ENCODE measurements at regions of chr22 and their contacts with region 1.

Region 1: DNA sequence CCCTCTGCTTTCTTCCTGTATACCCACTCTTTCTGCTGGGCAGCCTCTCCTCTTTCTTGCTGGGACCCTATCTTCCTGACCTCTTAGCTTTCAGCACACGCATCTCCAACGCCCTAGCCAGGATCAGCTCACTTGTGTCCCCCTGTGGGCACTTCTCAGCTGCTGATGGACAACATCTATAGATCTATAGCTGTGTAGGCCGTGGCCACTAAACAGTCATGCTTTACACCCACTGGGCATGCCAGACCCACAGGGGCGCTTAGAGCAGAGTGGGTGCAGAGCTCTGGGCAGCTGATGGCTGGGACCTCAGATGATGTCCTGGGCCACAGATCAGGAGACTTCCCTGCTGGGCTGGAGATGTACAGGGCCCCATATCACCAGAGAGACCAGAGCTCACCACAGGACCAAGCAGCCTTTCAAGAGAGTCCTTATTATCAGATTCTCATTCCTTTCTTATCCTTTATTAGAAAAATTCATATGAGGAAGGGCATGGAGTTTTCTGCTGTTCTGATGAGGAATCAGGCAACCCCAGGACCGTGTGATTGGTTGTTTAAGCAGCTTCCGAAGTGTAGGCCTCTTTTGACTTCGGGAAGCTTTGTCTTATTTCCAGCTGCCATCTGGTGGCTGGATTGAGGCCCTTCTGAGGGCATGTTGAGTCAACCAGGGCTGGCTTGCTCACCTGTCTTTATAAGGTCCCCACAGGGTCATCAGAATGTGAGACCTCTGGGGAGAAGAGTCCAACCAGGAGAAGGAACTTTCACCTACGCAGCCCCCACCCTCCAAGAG is 60.5 kb downstream of the OSBP2 start:
- DNase-seq: peak; percentile 79
- ATAC-seq: peak; percentile 98
- H3K4me3 ChIP-seq: no peak overlapping the region
- H3K27ac ChIP-seq: no peak overlapping the region
- H3K4me1 ChIP-seq: no peaks in the 10 kb centered on the region
- H3K27me3 ChIP-seq: no peaks in the 10 kb centered on the region
- CTCF ChIP-seq: peak; percentile 82

Region 2: GRCh38 chr22:30634471-30635233 is 120.5 kb before region 1 on chr22:
- CTCF ChIA-PET with region 1: interaction called, 28 read pairs
- POLR2A ChIA-PET with region 1: no interaction called
- intact Hi-C with region 1: loop called (anchors 1 kb)
- DNase-seq: peak; percentile 87
- ATAC-seq: peak; percentile 62
- H3K4me3 ChIP-seq: peak overlapping the region; percentile 65
- H3K27ac ChIP-seq: peak overlapping the region; percentile 68
- H3K4me1 ChIP-seq: peaks cover 23% of the 10 kb centered on the region
- H3K27me3 ChIP-seq: no peaks in the 10 kb centered on the region
- CTCF ChIP-seq: peak; percentile 89

Region 3: DNA sequence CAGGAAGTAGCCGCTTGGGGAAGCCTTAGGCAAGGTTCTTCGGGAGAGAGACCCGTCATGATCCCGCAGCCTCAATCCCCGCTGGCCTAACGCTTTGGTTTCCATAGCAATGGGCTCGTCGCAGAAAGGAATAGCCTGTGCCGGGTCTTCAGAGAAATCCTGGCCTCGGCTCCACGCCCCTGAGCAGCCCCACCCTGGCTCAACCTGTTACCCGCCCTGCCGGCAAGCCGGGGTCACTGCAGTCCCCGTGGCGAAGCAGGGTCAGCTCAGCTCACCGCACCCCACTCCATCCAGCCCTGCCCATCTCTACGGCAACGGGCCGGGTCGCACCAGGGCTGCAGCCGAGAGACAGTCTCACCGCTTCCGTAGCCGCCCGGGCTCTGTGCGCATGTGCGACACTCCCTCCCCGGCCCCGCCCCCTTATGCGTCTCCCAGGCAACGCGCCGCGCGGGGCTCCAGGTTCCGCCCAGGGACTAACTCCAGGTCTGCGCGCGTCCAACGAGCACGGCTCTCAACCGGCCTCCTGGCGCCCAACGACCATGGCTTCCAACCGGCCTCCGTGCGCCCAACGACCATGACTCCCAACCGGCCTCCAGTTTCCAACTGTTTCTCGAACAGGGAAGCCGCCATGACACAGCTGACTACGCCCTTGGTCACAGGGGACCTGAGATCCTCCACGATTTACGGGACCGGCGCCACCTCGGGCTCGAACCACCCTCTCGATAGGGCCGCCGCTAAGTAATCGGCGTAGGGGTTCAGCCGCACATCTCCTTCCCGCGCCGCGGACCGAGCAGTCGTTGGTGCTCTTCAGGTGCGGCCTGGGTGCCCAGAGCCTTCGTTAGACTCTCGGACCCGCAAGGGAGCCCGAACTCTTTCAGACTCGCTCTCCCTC is 87.4 kb before region 1 on chr22 and contains the start of gene DUSP18:
- CTCF ChIA-PET with region 1: no interaction called
- POLR2A ChIA-PET with region 1: no interaction called
- intact Hi-C with region 1: loop called (anchors 10 kb)
- DNase-seq: peak; percentile 85
- ATAC-seq: peak; percentile 92
- H3K4me3 ChIP-seq: peak within 1 kb of the TSS; percentile 82
- H3K27ac ChIP-seq: no peak within 1 kb of the TSS; the same call in 1 of the 2 replicates
- H3K4me1 ChIP-seq: peaks cover 13% of the 10 kb centered on the region; the same call in 1 of the 2 replicates
- H3K27me3 ChIP-seq: no peaks in the 10 kb centered on the region
- CTCF ChIP-seq: 0 out of 2 replicates have a peak, but pooled peaks have one; percentile 7
- total RNA-seq, gene DUSP18: 7.7 and 11.5 TPM in 2 replicates

Region 4: GRCh38 chr22:30694171-30694639 is 61.0 kb before region 1 on chr22:
- CTCF ChIA-PET with region 1: interaction called, 3 read pairs
- POLR2A ChIA-PET with region 1: no interaction called
- intact Hi-C with region 1: loop called (anchors 10 kb)
- DNase-seq: peak; percentile 44
- ATAC-seq: peak; percentile 61
- H3K4me3 ChIP-seq: peak overlapping the region; percentile 74
- H3K27ac ChIP-seq: 0 out of 2 replicates have a peak overlapping the region, but pooled peaks have one; percentile 8
- H3K4me1 ChIP-seq: peaks cover 9% of the 10 kb centered on the region; the same call in 1 of the 2 replicates
- H3K27me3 ChIP-seq: no peaks in the 10 kb centered on the region
- CTCF ChIP-seq: no peak

Region 5: DNA sequence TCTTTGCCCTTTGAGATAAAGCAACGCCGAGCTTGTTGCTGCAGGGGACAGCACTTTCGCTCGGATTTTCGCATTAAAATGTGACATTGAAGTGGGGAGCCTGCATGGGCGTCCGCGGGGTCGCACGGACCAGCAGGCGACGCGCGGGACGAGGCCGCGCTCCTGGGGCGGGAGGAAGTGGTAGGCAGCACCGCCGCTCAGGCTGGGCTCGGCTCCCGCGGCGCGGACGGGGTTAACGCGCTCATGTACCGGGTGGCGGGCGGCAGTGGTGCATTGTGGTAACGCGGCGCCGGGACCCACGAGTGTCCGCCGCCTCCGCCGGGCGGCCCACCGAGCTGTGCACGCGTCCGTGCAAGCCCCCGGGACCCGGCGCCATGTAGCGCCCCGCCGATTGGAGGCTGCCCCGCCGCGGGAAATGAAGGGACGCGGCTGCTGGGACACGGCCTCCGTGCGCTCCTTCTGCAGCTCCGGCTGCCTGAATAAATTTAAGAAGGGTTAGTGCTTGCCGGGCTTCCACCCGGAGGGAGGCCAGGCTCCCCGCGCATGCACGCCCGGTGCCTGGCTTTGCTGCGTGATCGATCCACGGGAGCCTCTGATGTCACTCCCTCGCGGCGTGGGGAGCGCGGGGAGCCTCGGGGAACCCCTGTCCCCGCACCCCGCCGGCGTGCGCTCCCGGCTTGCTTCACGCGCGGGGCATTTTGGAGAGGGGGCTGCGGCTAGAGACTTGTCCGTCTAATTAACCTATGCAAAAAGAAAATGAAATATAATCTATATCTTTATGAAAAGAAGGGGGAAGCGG is 67.3 kb after region 1 on chr22:
- CTCF ChIA-PET with region 1: no interaction called
- POLR2A ChIA-PET with region 1: no interaction called
- intact Hi-C with region 1: no loop called
- DNase-seq: no peak
- ATAC-seq: peak; percentile 53
- H3K4me3 ChIP-seq: peak overlapping the region; percentile 67
- H3K27ac ChIP-seq: no peak overlapping the region; the same call in 1 of the 2 replicates
- H3K4me1 ChIP-seq: peaks cover 17% of the 10 kb centered on the region; the same call in 1 of the 2 replicates
- H3K27me3 ChIP-seq: no peaks in the 10 kb centered on the region
- CTCF ChIP-seq: no peak

Region 6: GRCh38 chr22:30853101-30853500 is 97.9 kb after region 1 on chr22:
- CTCF ChIA-PET with region 1: no interaction called
- POLR2A ChIA-PET with region 1: no interaction called
- intact Hi-C with region 1: no loop called
- DNase-seq: no peak
- ATAC-seq: no peak
- H3K4me3 ChIP-seq: no peak overlapping the region
- H3K27ac ChIP-seq: no peak overlapping the region
- H3K4me1 ChIP-seq: no peaks in the 10 kb centered on the region
- H3K27me3 ChIP-seq: no peaks in the 10 kb centered on the region
- CTCF ChIP-seq: no peak

Region 7: GRCh38 chr22:30890686-30891442 is 135.7 kb after region 1 on chr22:
- CTCF ChIA-PET with region 1: no interaction called
- POLR2A ChIA-PET with region 1: no interaction called
- intact Hi-C with region 1: no loop called
- DNase-seq: peak; percentile 53
- ATAC-seq: peak; percentile 73
- H3K4me3 ChIP-seq: no peak overlapping the region
- H3K27ac ChIP-seq: no peak overlapping the region
- H3K4me1 ChIP-seq: no peaks in the 10 kb centered on the region
- H3K27me3 ChIP-seq: no peaks in the 10 kb centered on the region
- CTCF ChIP-seq: peak; percentile 72

Region 8: GRCh38 chr22:30902496-30903357 is 147.6 kb after region 1 on chr22:
- CTCF ChIA-PET with region 1: no interaction called
- POLR2A ChIA-PET with region 1: no interaction called
- intact Hi-C with region 1: no loop called
- DNase-seq: no peak
- ATAC-seq: no peak
- H3K4me3 ChIP-seq: no peak overlapping the region
- H3K27ac ChIP-seq: no peak overlapping the region
- H3K4me1 ChIP-seq: no peaks in the 10 kb centered on the region
- H3K27me3 ChIP-seq: no peaks in the 10 kb centered on the region
- CTCF ChIP-seq: no peak

Region 9: DNA sequence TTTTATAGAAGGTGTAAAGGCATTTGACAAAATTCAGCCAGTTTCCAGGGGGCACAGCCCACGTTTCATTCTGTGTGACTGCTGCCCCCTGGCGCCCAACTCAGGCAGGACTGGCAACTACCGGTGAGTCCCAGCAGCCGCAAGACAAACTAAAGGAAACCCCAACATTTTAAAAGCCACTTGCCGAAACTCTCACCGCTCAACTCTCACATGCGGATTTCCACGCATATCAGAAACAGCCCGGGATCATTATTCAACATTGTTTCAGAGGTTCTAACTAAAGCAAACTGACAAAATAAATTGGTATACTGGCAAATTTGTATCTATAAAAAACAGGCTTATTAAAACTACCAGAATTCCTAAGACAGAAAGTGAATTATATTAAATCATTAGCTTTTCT is 165.2 kb after region 1 on chr22:
- CTCF ChIA-PET with region 1: no interaction called
- POLR2A ChIA-PET with region 1: interaction called, 10 read pairs
- intact Hi-C with region 1: no loop called
- DNase-seq: peak; percentile 70
- ATAC-seq: peak; percentile 70
- H3K4me3 ChIP-seq: no peak overlapping the region
- H3K27ac ChIP-seq: no peak overlapping the region
- H3K4me1 ChIP-seq: no peaks in the 10 kb centered on the region
- H3K27me3 ChIP-seq: no peaks in the 10 kb centered on the region
- CTCF ChIP-seq: peak; percentile 82

Measured in PC-3 (cell line).